Tibial artery (tissue), 4 donors: ENCODE measurements at regions of chr19 and their contacts with region 1.

Region 1: DNA sequence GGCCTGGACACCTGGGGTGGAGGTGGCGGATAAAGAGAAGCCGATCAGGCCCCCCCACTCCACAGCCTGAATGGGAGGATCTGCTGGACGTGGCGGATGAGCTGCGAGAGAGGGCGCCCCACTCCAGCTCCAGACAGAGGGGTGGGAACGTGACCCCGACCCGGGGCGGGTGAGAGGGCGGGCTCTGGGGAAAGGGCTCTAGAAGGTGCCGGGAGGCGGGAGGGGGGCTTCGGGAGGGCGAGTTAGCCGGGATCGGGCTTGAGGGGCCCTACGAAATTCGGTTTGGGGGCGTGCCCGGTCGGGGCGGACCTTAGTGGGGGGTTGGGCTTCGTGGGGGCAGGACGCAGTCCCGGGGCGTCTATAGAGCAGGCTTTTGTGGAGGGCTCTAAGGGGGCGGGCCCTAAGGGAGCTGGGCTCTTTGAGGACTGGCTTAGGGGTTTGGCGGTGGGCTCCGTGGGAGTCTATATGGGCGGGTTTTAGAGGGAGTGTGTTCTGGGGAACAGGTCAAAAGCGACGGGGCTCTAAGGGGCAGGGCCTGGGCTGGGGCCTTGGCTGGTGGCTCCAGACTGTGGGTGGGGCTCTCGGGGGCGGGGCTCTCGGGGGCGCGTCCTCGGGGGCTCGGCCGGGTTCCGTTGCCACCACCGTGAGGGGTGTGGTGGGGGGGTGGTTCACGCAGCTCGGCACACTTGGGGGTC is 4.1 kb upstream of the NANOS3 start:
- DNase-seq: no peak
- H3K4me3 ChIP-seq: peak overlapping the region in 1 of 2 donors; percentile 42
- H3K27ac ChIP-seq: no peak overlapping the region
- H3K4me1 ChIP-seq: peaks cover 0 to 11% (median 9%) of the 10 kb centered on the region in 4 donors
- H3K27me3 ChIP-seq: peaks cover 0 to 9% of the 10 kb centered on the region in 2 donors
- CTCF ChIP-seq: no peak

Region 2: DNA sequence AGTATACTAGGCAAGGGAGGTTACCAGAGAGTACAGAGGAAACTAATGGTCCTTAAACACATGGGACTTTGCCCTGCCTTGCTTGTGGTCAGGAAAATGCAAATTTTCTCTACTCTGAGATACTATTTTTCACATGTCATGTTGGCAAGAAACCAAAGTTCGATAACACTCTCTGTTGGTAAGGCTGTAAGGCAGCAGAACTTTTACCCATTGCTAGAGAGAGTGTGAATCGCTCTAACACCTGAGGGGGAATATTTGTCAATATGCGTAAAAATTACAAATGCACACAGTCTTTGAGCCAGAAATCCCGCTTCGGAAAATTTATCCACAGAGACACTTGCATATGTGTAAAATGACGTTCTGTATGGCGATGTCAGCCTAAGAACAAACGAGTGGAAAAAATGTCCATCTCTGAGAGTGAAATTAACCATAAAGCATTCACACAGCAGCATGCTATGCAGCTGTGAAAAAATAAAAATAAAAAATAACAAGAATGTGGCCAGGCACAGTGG is 142.7 kb after region 1 on chr19:
- intact Hi-C with region 1: no loop called
- DNase-seq: no peak
- H3K4me3 ChIP-seq: no peak overlapping the region
- H3K27ac ChIP-seq: no peak overlapping the region
- H3K4me1 ChIP-seq: no peaks in the 10 kb centered on the region
- H3K27me3 ChIP-seq: no peaks in the 10 kb centered on the region
- CTCF ChIP-seq: no peak

Region 3: GRCh38 chr19:14183741-14184350 is 311.0 kb after region 1 on chr19:
- intact Hi-C with region 1: loop called (anchors 1 kb)
- DNase-seq: no peak
- H3K4me3 ChIP-seq: no peak overlapping the region
- H3K27ac ChIP-seq: no peak overlapping the region
- H3K4me1 ChIP-seq: no peaks in the 10 kb centered on the region
- H3K27me3 ChIP-seq: no peaks in the 10 kb centered on the region
- CTCF ChIP-seq: no peak